A673 (cell line): ENCODE measurements at regions of chr7 and their contacts with region 1.

Region 1: GRCh38 chr7:18495412-18496340 is at the start of gene HDAC9:
- DNase-seq: peak; percentile 75
- H3K4me3 ChIP-seq: peak within 1 kb of the TSS; percentile 48
- H3K27ac ChIP-seq: peak within 1 kb of the TSS; percentile 63
- H3K4me1 ChIP-seq: peaks cover 24% of the 10 kb centered on the region
- H3K27me3 ChIP-seq: no peaks in the 10 kb centered on the region
- CTCF ChIP-seq: no peak
- total RNA-seq, gene HDAC9: 28.3 and 31.9 TPM in 2 replicates

Region 2: DNA sequence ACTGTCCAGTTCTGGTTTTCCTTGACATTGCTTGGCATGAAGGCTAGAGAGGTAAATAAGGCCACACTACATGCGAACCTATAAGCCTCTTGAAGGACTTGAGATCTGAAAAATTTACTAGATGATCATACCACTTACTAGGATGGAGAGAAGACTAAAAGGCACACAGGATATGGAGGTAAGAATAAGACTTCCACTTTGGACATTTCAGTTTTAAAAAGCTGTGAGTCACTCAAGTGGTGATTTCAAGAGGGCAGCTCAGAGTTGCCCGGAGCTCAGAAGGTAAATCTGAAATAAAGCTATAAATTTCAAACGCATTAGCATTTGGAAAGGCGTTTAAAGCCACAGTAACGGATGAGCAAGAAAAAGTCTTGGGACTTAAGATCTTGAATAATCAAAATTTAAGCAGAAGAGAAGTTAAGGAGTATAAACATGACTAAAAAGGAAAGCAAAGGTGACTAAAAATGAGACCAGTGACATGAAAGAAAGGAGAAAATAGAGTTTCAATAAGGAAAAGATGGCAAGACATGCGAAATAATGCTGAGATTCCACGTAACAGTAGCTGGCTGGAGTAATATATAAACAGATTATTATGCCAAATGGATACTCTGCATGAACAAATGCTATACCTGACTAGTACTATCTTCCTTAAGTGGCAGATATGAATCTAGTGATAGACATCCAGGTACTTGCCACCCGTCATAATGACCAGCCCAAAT is 623.7 kb before region 1 on chr7:
- CTCF ChIA-PET with region 1: no interaction called
- POLR2A ChIA-PET with region 1: no interaction called
- intact Hi-C with region 1: no loop called
- DNase-seq: no peak
- H3K4me3 ChIP-seq: no peak overlapping the region
- H3K27ac ChIP-seq: no peak overlapping the region
- H3K4me1 ChIP-seq: peaks cover 9% of the 10 kb centered on the region
- H3K27me3 ChIP-seq: no peaks in the 10 kb centered on the region
- CTCF ChIP-seq: no peak

Region 3: GRCh38 chr7:18429547-18429946 is 66.1 kb before region 1 on chr7:
- CTCF ChIA-PET with region 1: no interaction called
- POLR2A ChIA-PET with region 1: no interaction called
- intact Hi-C with region 1: loop called (anchors 2 kb)
- DNase-seq: no peak
- H3K4me3 ChIP-seq: no peak overlapping the region
- H3K27ac ChIP-seq: no peak overlapping the region
- H3K4me1 ChIP-seq: peaks cover 31% of the 10 kb centered on the region
- H3K27me3 ChIP-seq: no peaks in the 10 kb centered on the region
- CTCF ChIP-seq: no peak

Region 4: GRCh38 chr7:18693406-18693805 is 197.7 kb after region 1 on chr7:
- CTCF ChIA-PET with region 1: no interaction called
- POLR2A ChIA-PET with region 1: no interaction called
- intact Hi-C with region 1: no loop called
- DNase-seq: peak; percentile 77
- H3K4me3 ChIP-seq: no peak overlapping the region
- H3K27ac ChIP-seq: no peak overlapping the region
- H3K4me1 ChIP-seq: peaks cover 18% of the 10 kb centered on the region
- H3K27me3 ChIP-seq: no peaks in the 10 kb centered on the region
- CTCF ChIP-seq: peak; percentile 75

Region 5: GRCh38 chr7:19209166-19209696 is 713.6 kb after region 1 on chr7:
- CTCF ChIA-PET with region 1: no interaction called
- POLR2A ChIA-PET with region 1: no interaction called
- intact Hi-C with region 1: no loop called
- DNase-seq: no peak
- H3K4me3 ChIP-seq: no peak overlapping the region
- H3K27ac ChIP-seq: no peak overlapping the region
- H3K4me1 ChIP-seq: peaks cover 9% of the 10 kb centered on the region
- H3K27me3 ChIP-seq: no peaks in the 10 kb centered on the region
- CTCF ChIP-seq: no peak